ENCODE measurements at regions of chr12 and their contacts with region 1.

Region 1: GRCh38 chr12:131747276-131748177 is 36.6 kb downstream of the SFSWAP start:
- DNase-seq: no peak
- H3K4me3 ChIP-seq: no peak overlapping the region
- H3K27ac ChIP-seq: no peak overlapping the region
- H3K4me1 ChIP-seq: no peaks in the 10 kb centered on the region
- H3K27me3 ChIP-seq: no peaks in the 10 kb centered on the region

Region 2: GRCh38 chr12:131673888-131674257 is 73.7 kb before region 1 on chr12:
- CTCF ChIA-PET with region 1: no interaction called
- POLR2A ChIA-PET with region 1: interaction called, 10 read pairs
- DNase-seq: no peak
- H3K4me3 ChIP-seq: no peak overlapping the region
- H3K27ac ChIP-seq: no peak overlapping the region
- H3K4me1 ChIP-seq: peaks cover 2 to 7% (median 4%) of the 10 kb centered on the region in 4 experiments
- H3K27me3 ChIP-seq: no peaks in the 10 kb centered on the region

Region 3: GRCh38 chr12:131710464-131711457 is 36.8 kb before region 1 on chr12 and contains the start of gene SFSWAP:
- CTCF ChIA-PET with region 1: no interaction called
- POLR2A ChIA-PET with region 1: no interaction called
- DNase-seq: peak; percentile 81 to 84 (median 82)
- H3K4me3 ChIP-seq: peak within 1 kb of the TSS; percentile 78 to 100 (median 96)
- H3K27ac ChIP-seq: peak within 1 kb of the TSS; percentile 100
- H3K4me1 ChIP-seq: peaks cover 4 to 22% (median 17%) of the 10 kb centered on the region in 4 experiments
- H3K27me3 ChIP-seq: peaks cover 0 to 2% (median 0%) of the 10 kb centered on the region in 5 experiments

Region 4: DNA sequence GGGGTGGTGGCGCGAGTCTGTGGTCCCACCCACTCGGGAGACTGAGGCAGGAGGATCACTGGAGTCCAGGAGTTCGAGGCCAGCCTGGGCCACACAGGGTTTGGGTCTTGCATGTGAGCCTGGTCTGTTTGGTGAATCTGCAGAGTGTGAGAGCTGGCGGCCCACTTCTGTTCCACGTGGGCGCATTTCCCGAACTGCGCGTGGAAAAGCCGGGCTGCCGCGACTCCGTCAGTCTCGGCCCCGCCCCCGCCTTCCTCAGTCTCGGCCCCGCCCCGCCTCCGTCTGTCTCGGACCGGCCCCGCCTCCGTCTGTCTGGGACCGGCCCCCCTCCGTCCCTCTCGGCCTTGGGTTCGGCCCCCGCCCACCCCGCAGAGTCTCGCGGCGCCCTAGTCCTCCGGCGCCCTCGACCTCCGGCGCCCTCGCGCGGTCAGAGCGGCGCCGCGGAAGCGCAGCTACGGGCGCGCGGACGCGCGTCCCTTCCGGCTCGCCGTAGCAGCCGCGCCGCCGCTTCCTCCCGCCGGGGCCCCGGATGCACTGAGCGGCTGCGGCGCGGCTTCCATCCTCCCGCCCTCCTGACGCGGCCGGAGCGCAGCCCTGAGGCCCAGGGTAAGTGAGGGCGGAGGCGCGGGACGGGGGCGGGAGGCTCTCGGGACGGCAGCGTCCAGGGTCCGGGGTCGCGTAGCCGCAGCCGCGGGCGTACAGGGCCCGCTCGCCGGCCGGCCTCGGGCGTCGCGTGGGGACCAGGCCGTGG is 202.1 kb after region 1 on chr12 and contains the start of gene EP400:
- CTCF ChIA-PET with region 1: no interaction called
- POLR2A ChIA-PET with region 1: no interaction called
- DNase-seq: peak; percentile 92 to 96 (median 95)
- H3K4me3 ChIP-seq: peak within 1 kb of the TSS; percentile 67 to 90 (median 84)
- H3K27ac ChIP-seq: peak within 1 kb of the TSS; percentile 50 to 86
- H3K4me1 ChIP-seq: peaks cover 3 to 34% (median 28%) of the 10 kb centered on the region in 4 experiments
- H3K27me3 ChIP-seq: no peaks in the 10 kb centered on the region